Endothelial cell of umbilical vein (primary cell): ENCODE measurements at regions of chr15 and their contacts with region 1.

Region 1: GRCh38 chr15:43285609-43286037 is 18.9 kb upstream of the TGM5 start:
- DNase-seq: peak; percentile 64
- H3K4me3 ChIP-seq: no peak overlapping the region
- H3K27ac ChIP-seq: no peak overlapping the region
- H3K4me1 ChIP-seq: peaks cover 2% of the 10 kb centered on the region
- H3K27me3 ChIP-seq: peaks cover 2 to 6% of the 10 kb centered on the region in 2 experiments
- CTCF ChIP-seq: peak; percentile 66 to 75
- POLR2A ChIP-seq: no peak

Region 2: DNA sequence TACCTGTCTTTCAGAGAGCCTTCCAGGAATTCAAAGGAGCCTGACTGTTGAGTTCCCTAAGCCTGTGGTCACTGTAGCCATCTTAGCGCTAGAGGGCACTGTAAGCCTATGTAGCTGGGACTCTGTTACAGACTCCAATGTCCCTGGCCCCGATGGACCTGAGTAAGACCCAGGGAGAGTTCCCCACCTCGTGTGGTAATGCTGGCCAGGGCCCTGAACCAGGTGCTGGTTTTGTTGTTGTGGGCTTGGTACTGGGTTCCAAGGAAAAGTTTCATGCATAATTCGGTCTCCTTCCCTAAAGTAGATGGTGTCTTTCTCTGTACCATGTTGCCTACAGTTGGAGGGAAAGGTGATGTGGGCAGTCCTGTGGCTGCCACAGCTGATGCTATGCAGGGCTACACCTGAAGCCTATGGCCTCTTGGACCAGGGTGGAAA is 581.1 kb before region 1 on chr15:
- CTCF ChIA-PET with region 1: interaction called, 17 read pairs
- POLR2A ChIA-PET with region 1: interaction called, 3 read pairs
- dilution Hi-C with region 1: no loop called
- intact Hi-C with region 1: loop called (anchors 10 kb)
- DNase-seq: peak; percentile 79
- H3K4me3 ChIP-seq: no peak overlapping the region
- H3K27ac ChIP-seq: no peak overlapping the region
- H3K4me1 ChIP-seq: peaks cover 12% of the 10 kb centered on the region
- H3K27me3 ChIP-seq: no peaks in the 10 kb centered on the region
- CTCF ChIP-seq: peak; percentile 81 to 85
- POLR2A ChIP-seq: no peak

Region 3: GRCh38 chr15:43146187-43146586 is 139.4 kb before region 1 on chr15:
- CTCF ChIA-PET with region 1: no interaction called
- POLR2A ChIA-PET with region 1: no interaction called
- dilution Hi-C with region 1: no loop called
- intact Hi-C with region 1: no loop called
- DNase-seq: no peak
- H3K4me3 ChIP-seq: no peak overlapping the region
- H3K27ac ChIP-seq: no peak overlapping the region
- H3K4me1 ChIP-seq: peaks cover 16% of the 10 kb centered on the region
- H3K27me3 ChIP-seq: no peaks in the 10 kb centered on the region
- CTCF ChIP-seq: no peak
- POLR2A ChIP-seq: no peak

Region 4: GRCh38 chr15:43194795-43195194 is 90.8 kb before region 1 on chr15:
- CTCF ChIA-PET with region 1: interaction called, 15 read pairs
- POLR2A ChIA-PET with region 1: no interaction called
- dilution Hi-C with region 1: no loop called
- intact Hi-C with region 1: no loop called
- DNase-seq: no peak
- H3K4me3 ChIP-seq: no peak overlapping the region
- H3K27ac ChIP-seq: no peak overlapping the region
- H3K4me1 ChIP-seq: peaks cover 11% of the 10 kb centered on the region
- H3K27me3 ChIP-seq: no peaks in the 10 kb centered on the region
- CTCF ChIP-seq: no peak
- POLR2A ChIP-seq: no peak

Region 5: GRCh38 chr15:43218908-43219706 is 66.5 kb before region 1 on chr15:
- CTCF ChIA-PET with region 1: interaction called, 427 read pairs
- POLR2A ChIA-PET with region 1: no interaction called
- dilution Hi-C with region 1: no loop called
- intact Hi-C with region 1: no loop called
- DNase-seq: peak; percentile 6
- H3K4me3 ChIP-seq: no peak overlapping the region
- H3K27ac ChIP-seq: no peak overlapping the region
- H3K4me1 ChIP-seq: no peaks in the 10 kb centered on the region
- H3K27me3 ChIP-seq: peaks cover 5 to 26% of the 10 kb centered on the region in 2 experiments
- CTCF ChIP-seq: peak; percentile 19 to 27
- POLR2A ChIP-seq: no peak

Region 6: DNA sequence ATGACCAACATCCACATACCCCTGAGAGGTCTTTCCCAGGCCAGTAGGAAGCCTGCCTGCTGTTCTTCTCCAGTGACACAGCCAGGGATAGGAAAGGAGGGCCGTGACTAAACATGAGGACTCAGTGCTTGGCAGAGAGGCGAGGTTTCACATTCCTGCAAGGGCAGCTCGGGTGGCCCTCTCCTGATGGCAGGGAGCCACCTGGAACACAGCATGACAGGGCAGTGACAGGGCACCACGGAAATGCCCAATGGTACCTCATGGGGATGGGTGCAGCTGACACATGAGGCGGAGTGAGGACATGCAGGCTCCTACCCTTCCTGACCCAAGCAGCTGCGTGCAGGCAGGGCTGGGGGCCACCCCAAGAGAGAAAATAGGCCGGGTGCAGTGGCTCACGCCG is 11.5 kb before region 1 on chr15:
- CTCF ChIA-PET with region 1: interaction called, 25 read pairs
- POLR2A ChIA-PET with region 1: no interaction called
- dilution Hi-C with region 1: no loop called
- intact Hi-C with region 1: no loop called
- DNase-seq: no peak
- H3K4me3 ChIP-seq: no peak overlapping the region
- H3K27ac ChIP-seq: no peak overlapping the region
- H3K4me1 ChIP-seq: no peaks in the 10 kb centered on the region
- H3K27me3 ChIP-seq: peaks cover 0 to 6% of the 10 kb centered on the region in 2 experiments
- CTCF ChIP-seq: no peak
- POLR2A ChIP-seq: no peak